Heart right ventricle (tissue), 16 donors: ENCODE measurements at regions of chr18 and their contacts with region 1.

Region 1: DNA sequence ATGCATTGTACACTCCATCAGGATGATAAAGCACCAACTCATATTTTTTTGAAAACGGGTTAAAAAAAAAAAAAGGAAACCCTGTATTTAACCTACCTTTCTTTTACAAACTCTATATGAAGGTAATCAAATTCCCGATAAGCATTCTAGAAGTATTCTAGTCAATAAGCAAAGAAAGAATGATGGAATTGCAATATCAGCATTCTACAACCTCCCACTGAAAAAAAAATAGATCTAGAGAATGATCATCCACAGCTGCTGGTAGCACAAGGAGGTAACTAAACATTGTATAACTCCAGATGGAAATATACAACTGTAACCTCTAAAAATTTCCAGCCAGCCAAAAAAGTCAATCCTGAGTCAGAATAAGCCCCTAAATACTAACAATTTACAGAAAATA is 95.3 kb upstream of the DCC start:
- DNase-seq: no peak
- ATAC-seq: no peak
- H3K4me3 ChIP-seq: no peak overlapping the region
- H3K27ac ChIP-seq: no peak overlapping the region
- H3K4me1 ChIP-seq: no peaks in the 10 kb centered on the region
- H3K27me3 ChIP-seq: no peaks in the 10 kb centered on the region
- CTCF ChIP-seq: no peak

Region 2: GRCh38 chr18:52140986-52141385 is 103.7 kb before region 1 on chr18:
- intact Hi-C with region 1: no loop called
- DNase-seq: no peak
- ATAC-seq: no peak
- H3K4me3 ChIP-seq: no peak overlapping the region
- H3K27ac ChIP-seq: no peak overlapping the region
- H3K4me1 ChIP-seq: no peaks in the 10 kb centered on the region
- H3K27me3 ChIP-seq: no peaks in the 10 kb centered on the region
- CTCF ChIP-seq: no peak

Region 3: GRCh38 chr18:52190631-52191030 is 54.0 kb before region 1 on chr18:
- intact Hi-C with region 1: loop called in 1 of 10 experiments (anchors 5 kb)
- DNase-seq: no peak
- ATAC-seq: no peak
- H3K4me3 ChIP-seq: no peak overlapping the region
- H3K27ac ChIP-seq: no peak overlapping the region
- H3K4me1 ChIP-seq: no peaks in the 10 kb centered on the region
- H3K27me3 ChIP-seq: no peaks in the 10 kb centered on the region
- CTCF ChIP-seq: no peak

Region 4: DNA sequence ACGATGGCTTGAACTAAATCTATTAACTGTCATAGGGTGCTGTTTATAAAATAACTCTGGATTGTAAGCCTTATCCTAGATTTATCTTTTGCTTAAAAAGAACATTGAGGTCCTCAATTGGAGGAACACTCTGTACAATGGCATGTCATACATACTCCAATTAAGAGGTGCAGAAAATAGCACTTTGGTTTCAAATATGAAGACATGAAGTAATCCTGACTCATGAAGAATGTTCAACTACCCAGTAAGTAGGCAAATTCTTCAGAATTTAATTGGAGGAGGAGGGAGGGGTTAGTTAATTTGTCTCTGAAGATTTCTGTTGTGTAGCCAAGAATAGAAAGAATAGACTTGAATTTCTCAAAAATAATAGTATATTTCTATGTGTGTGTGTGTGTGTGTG is 131.4 kb after region 1 on chr18:
- intact Hi-C with region 1: no loop called
- DNase-seq: no peak
- ATAC-seq: no peak
- H3K4me3 ChIP-seq: no peak overlapping the region
- H3K27ac ChIP-seq: no peak overlapping the region
- H3K4me1 ChIP-seq: no peaks in the 10 kb centered on the region
- H3K27me3 ChIP-seq: peaks cover 0 to 4% (median 0%) of the 10 kb centered on the region in 7 donors
- CTCF ChIP-seq: no peak